Breast epithelium (tissue), 4 donors: ENCODE measurements at regions of chr12 and their contacts with region 1.

Region 1: GRCh38 chr12:39103552-39104165 is 198.3 kb upstream of the CPNE8 start:
- DNase-seq: no peak
- H3K4me3 ChIP-seq: no peak overlapping the region
- H3K27ac ChIP-seq: no peak overlapping the region
- H3K4me1 ChIP-seq: no peaks in the 10 kb centered on the region
- H3K27me3 ChIP-seq: no peaks in the 10 kb centered on the region
- CTCF ChIP-seq: peak; percentile 47 to 61 (median 59)
- POLR2A ChIP-seq: no peak

Region 2: GRCh38 chr12:38664661-38665269 is 438.9 kb before region 1 on chr12:
- intact Hi-C with region 1: loop called (anchors 10 kb)
- DNase-seq: no peak
- H3K4me3 ChIP-seq: no peak overlapping the region
- H3K27ac ChIP-seq: no peak overlapping the region
- H3K4me1 ChIP-seq: no peaks in the 10 kb centered on the region
- H3K27me3 ChIP-seq: no peaks in the 10 kb centered on the region
- CTCF ChIP-seq: no peak
- POLR2A ChIP-seq: no peak

Region 3: DNA sequence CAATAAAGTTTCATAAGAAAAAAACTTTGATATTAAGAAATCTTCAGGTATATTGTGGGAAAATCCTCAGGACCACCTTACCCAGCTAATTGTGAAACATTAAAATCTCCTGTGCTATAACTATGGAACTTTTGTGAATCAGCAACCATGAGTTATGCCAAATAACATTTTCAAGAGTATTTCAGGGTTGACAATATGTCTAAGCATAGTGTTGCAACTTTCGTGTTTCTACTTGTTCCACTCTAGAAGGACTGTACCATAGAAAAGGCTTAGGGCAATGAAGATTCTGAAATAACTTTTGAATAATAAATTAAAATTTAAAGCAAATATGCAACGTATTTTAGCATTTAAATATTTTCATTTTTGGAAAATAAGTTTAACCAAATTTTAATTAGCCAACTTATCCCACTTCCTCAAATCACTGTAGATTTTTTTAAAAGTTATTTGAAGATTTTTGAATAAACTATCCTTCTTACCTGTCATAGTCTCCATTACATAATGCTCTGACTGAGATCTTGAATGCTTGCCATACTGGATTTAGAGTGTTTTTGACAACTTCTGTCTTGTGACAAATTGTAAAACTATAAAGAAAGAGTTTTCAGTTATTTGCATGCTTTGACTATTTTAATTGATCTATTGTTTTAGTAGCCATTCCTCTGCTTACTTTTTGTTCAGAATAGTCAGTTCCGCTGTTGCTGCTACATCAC is 341.9 kb before region 1 on chr12:
- intact Hi-C with region 1: no loop called
- DNase-seq: no peak
- H3K4me3 ChIP-seq: no peak overlapping the region
- H3K27ac ChIP-seq: no peak overlapping the region
- H3K4me1 ChIP-seq: no peaks in the 10 kb centered on the region
- H3K27me3 ChIP-seq: no peaks in the 10 kb centered on the region
- CTCF ChIP-seq: no peak
- POLR2A ChIP-seq: no peak

Region 4: GRCh38 chr12:38823739-38824138 is 279.9 kb before region 1 on chr12:
- intact Hi-C with region 1: no loop called
- DNase-seq: no peak
- H3K4me3 ChIP-seq: no peak overlapping the region
- H3K27ac ChIP-seq: no peak overlapping the region
- H3K4me1 ChIP-seq: no peaks in the 10 kb centered on the region
- H3K27me3 ChIP-seq: no peaks in the 10 kb centered on the region
- CTCF ChIP-seq: no peak
- POLR2A ChIP-seq: no peak

Region 5: DNA sequence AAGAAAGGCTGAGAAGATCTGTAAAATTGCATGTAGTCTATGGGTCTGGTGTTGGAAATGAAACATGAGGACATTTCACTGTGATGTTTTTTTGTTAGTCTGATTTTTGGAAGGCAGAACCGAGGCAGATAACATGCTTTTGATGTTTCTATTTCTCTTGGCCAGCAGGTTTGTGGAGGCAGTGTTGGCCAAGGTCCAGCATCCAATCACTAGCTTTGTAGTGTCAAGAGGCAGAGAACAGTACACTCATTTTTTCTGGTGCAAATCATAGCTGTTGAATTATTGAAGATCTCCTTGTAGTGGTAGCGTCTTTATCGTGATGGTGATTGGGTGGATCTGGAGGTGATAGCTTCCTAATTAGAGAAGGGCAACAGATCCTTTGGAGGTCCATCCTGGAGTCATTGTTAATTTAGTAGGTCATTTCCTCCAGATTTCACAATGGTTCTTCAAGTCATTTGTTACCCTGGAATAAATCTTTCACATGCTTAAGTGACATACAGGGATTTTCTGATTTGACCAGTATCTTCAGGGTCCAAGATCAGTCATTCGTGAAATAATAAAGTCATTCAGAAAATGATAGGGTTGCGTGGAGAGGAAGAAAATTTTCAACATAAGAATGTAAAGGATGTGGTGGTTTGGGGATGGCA is 54.2 kb after region 1 on chr12:
- intact Hi-C with region 1: no loop called
- DNase-seq: no peak
- H3K4me3 ChIP-seq: no peak overlapping the region
- H3K27ac ChIP-seq: no peak overlapping the region
- H3K4me1 ChIP-seq: no peaks in the 10 kb centered on the region
- H3K27me3 ChIP-seq: no peaks in the 10 kb centered on the region
- CTCF ChIP-seq: no peak
- POLR2A ChIP-seq: no peak